Left ventricle myocardium superior (tissue), 1 donor: ENCODE measurements at regions of chr2 and their contacts with region 1.

Region 1: DNA sequence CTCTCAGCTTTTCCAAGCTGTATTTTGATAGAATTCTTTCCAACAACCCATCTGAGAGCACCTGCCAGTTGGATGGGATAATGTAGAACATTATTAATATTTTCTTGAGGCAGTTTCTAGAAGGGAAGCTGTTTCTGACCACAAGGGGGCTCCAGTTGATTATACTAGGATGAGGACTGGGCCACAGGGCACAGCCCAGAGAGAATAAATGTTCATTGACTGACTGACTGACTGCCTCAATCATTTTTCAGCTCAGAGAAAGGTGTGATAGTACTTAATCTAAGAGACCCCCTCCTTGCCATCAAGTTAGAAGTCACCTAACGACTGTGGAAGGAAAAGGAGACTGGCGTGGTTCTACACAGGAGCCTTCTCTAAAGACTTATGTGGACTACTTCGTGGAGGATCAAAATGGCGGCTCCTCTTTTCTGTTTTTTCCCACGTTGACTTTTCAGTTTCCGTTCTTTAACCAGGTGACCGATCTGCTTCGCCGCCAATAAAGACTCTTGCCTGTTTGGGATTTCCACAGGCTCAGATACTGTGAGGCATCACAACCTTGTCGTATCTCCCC is 31.9 kb upstream of the CREG2 start:
- DNase-seq: no peak
- ATAC-seq: peak; percentile 85

Region 2: GRCh38 chr2:101831351-101831865 is 412.2 kb after region 1 on chr2:
- intact Hi-C with region 1: loop called (anchors 5 kb)
- DNase-seq: peak; percentile 74
- ATAC-seq: peak; percentile 81